ENCODE measurements at regions of chr10 and their contacts with region 1.

Region 1: DNA sequence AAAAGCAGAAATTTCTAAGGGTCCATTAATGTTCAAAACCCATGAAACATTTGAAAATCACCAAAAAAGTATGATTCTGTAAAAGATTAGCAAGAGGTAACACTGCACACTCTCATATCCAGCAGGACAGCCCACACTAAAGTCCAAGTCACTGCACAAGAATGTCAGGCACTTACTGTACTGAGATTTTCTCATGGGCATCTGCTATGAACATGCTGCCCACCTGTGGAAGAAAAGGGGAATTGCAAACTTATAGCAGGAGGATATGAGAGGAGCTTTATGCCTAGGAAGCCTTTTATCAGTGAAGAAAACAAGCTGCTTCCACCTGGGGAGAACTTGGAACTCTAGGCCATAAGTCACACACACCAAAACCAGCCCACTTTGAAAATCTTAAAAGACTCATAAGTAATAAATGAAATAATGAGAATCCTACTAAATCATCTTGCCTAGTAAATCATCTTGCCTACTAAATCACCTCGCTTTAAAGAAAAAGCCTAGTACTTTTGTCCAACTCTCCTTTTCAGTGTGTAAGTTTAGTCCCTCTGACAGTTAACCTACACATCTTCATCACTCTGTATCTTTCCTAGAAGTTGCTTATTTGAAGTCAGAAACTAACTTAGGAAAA is 46.1 kb downstream of the ARMH3 start:
- DNase-seq: peak in 8 of 9 donors; percentile 33 to 66 (median 52)
- ATAC-seq: peak; percentile 86
- H3K4me3 ChIP-seq: no peak overlapping the region
- H3K4me3 Mint-ChIP-seq: no peak overlapping the region
- H3K27ac ChIP-seq: no peak overlapping the region
- H3K27ac Mint-ChIP-seq: peak overlapping the region in 4 of 9 donors; percentile 12 to 39 (median 20)
- H3K4me1 ChIP-seq: no peaks in the 10 kb centered on the region
- H3K4me1 Mint-ChIP-seq: peaks cover 0 to 13% (median 4%) of the 10 kb centered on the region in 7 donors
- H3K27me3 ChIP-seq: no peaks in the 10 kb centered on the region
- H3K27me3 Mint-ChIP-seq: no peaks in the 10 kb centered on the region

Region 2: GRCh38 chr10:101716851-101717659 is 292.9 kb before region 1 on chr10:
- CTCF ChIA-PET with region 1: no interaction called
- POLR2A ChIA-PET with region 1: no interaction called
- intact Hi-C with region 1: no loop called
- DNase-seq: no peak
- ATAC-seq: no peak
- H3K4me3 ChIP-seq: no peak overlapping the region
- H3K4me3 Mint-ChIP-seq: peak overlapping the region in 1 of 10 donors; percentile 23
- H3K27ac ChIP-seq: no peak overlapping the region
- H3K27ac Mint-ChIP-seq: peak overlapping the region in 1 of 9 donors; percentile 82
- H3K4me1 ChIP-seq: no peaks in the 10 kb centered on the region
- H3K4me1 Mint-ChIP-seq: peaks cover 0 to 6% (median 0%) of the 10 kb centered on the region in 7 donors
- H3K27me3 ChIP-seq: no peaks in the 10 kb centered on the region
- H3K27me3 Mint-ChIP-seq: peaks cover 3 to 32% (median 8%) of the 10 kb centered on the region in 5 donors

Region 3: GRCh38 chr10:101889256-101890210 is 120.4 kb before region 1 on chr10:
- CTCF ChIA-PET with region 1: interaction called, 9 read pairs
- POLR2A ChIA-PET with region 1: no interaction called
- intact Hi-C with region 1: loop called (anchors 1 kb)
- DNase-seq: peak; percentile 15 to 66 (median 53)
- ATAC-seq: peak; percentile 78
- H3K4me3 ChIP-seq: no peak overlapping the region
- H3K4me3 Mint-ChIP-seq: no peak overlapping the region
- H3K27ac ChIP-seq: no peak overlapping the region
- H3K27ac Mint-ChIP-seq: peak overlapping the region in 4 of 9 donors; percentile 9 to 46 (median 35)
- H3K4me1 ChIP-seq: no peaks in the 10 kb centered on the region
- H3K4me1 Mint-ChIP-seq: peaks cover 0 to 6% (median 2%) of the 10 kb centered on the region in 7 donors
- H3K27me3 ChIP-seq: no peaks in the 10 kb centered on the region
- H3K27me3 Mint-ChIP-seq: no peaks in the 10 kb centered on the region

Region 4: DNA sequence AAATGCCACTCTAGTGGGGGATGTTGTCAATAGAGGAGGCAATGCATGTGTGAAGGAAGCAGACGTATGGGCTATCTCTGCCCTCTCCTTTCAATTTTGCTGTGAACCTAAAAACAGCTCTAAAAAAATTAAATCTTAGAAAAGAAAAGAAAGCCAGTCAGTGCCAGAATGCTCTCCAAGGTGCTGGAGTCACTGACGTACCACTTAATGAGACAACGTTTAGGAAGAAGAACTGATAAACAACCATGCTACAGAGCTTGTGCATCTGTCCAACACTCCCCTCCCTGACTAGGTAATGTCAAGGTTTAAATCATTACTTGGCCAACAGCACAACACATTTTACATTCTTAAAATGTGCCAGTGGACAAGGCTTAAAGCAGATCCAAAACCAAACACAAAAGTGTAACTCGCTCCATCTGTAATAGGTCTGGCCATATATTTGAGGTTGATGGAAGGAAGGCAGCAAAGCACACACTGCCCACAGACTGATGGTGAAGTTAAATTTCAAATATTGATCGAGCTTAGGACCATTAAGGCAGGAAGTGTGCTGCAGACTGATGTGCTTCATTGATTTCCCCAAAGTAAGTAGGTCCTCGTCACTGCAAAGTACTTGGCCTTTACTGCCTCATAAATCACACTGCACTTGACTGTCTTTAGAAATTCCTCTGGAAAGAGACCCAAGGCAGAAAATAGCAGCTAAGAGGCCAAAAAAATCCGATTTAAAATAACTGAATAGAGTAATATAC is 30.6 kb after region 1 on chr10:
- CTCF ChIA-PET with region 1: no interaction called
- POLR2A ChIA-PET with region 1: no interaction called
- intact Hi-C with region 1: no loop called
- DNase-seq: no peak
- ATAC-seq: no peak
- H3K4me3 ChIP-seq: no peak overlapping the region
- H3K4me3 Mint-ChIP-seq: no peak overlapping the region
- H3K27ac ChIP-seq: no peak overlapping the region
- H3K27ac Mint-ChIP-seq: no peak overlapping the region
- H3K4me1 ChIP-seq: peaks cover 0 to 3% of the 10 kb centered on the region in 2 donors
- H3K4me1 Mint-ChIP-seq: peaks cover 7 to 38% (median 25%) of the 10 kb centered on the region in 7 donors
- H3K27me3 ChIP-seq: no peaks in the 10 kb centered on the region
- H3K27me3 Mint-ChIP-seq: no peaks in the 10 kb centered on the region